Tibial artery (tissue), 4 donors: ENCODE measurements at regions of chr5 and their contacts with region 1.

Region 1: DNA sequence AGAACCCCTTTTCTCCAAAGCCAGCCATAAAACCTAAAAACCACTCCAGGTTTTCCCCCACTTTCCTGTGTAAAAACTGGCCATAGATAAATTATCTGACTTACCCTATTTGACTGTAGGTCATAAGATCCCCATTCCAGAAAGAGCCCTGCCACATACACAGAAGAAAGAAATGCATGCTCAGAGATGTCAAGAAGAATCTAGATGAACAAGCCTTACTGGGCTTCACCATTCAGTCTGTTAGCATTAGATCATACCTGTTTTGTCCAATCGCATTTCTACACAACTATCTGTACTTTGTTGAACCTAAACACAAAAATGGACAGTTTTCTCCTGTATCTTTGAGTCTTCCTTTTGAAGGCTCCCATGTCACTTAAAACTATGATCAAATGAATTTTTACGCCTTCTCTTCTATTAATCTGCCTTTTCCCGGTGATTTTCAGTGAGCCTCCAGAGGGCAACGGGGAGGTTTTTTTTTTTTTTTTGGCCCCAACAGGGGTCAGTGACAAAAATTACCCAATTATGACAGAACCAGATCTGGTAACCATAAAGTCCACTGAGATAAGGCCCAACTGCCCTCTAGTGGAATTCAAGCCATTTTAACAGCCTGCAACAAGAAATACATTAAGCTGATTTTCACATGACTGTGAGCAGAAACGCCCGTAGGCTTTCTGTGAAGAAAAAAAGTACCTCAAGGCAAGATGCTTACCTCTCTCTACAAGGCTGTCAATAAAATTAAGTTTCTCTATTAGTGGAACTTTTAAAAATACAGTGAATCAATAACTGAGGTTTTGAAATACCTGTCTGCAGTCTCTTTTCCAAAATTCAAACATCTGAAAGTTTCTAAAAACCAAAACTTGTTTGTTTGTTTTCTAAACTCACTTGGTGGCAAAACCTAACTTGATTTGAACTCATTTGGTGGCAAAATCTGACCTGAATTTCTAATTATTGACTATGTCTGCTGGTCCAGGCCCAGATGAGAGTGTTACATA is 49.9 kb upstream of the FST start:
- DNase-seq: no peak
- H3K4me3 ChIP-seq: no peak overlapping the region
- H3K27ac ChIP-seq: no peak overlapping the region
- H3K4me1 ChIP-seq: no peaks in the 10 kb centered on the region
- H3K27me3 ChIP-seq: no peaks in the 10 kb centered on the region
- CTCF ChIP-seq: peak; percentile 51 to 68

Region 2: DNA sequence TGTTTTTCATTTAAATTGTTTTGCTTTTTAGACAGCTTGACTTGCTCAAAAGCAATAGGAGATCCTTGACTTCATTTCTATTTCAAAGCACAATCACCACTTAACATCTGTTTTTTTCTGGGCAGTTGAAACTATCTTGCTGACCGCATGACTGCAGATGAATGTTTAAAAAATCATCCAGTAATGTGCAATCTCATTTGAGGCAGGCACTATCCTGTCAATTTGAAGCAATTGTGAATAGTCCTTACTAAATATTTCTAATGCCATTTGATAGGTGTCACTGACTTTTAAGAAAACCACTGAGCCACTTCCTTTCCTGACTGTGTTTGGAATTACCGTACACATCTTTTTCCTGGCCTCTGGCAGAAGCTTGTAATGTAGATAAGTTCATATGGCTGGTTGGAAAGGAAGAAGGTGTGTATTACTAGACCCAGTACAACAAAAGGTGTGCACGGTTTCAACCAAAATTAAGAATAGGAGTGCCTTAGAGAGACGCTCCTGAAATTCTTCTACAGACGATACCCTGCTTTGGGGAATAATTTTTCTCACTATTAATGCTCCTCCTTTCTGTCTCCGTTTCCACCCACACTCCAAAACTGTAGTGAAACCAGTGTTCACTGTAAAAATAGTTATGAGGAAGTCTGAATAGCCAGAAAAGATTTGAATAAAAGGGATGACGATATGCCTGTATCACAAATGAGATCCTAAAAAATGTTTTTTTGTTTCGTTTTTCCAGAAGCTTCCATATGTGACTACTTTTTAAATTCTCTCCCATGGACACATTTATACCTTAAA is 184.3 kb before region 1 on chr5:
- intact Hi-C with region 1: no loop called
- DNase-seq: no peak
- H3K4me3 ChIP-seq: peak overlapping the region in 1 of 2 donors; percentile 3
- H3K27ac ChIP-seq: no peak overlapping the region
- H3K4me1 ChIP-seq: peaks cover 0 to 22% (median 8%) of the 10 kb centered on the region in 4 donors
- H3K27me3 ChIP-seq: no peaks in the 10 kb centered on the region
- CTCF ChIP-seq: no peak

Region 3: GRCh38 chr5:53262348-53262970 is 168.1 kb before region 1 on chr5:
- intact Hi-C with region 1: loop called (anchors 10 kb)
- DNase-seq: peak in 1 of 2 donors; percentile 31
- H3K4me3 ChIP-seq: no peak overlapping the region
- H3K27ac ChIP-seq: no peak overlapping the region
- H3K4me1 ChIP-seq: peaks cover 0 to 12% (median 0%) of the 10 kb centered on the region in 4 donors
- H3K27me3 ChIP-seq: no peaks in the 10 kb centered on the region
- CTCF ChIP-seq: peak; percentile 50 to 51